Dendritic cell treated with granulocyte-macrophage colony-stimulating factor and Interleukin-4, amounts not matched to agents 40 ng/mL and 50 ng/mL, for 4 days (primary cell): ENCODE measurements at regions of chr14 and their contacts with region 1.

Region 1: GRCh38 chr14:89489761-89490437 is 72.9 kb upstream of the FOXN3 start:
- H3K4me3 Mint-ChIP-seq: no peak overlapping the region
- H3K27ac Mint-ChIP-seq: peak overlapping the region; percentile 66
- H3K4me1 Mint-ChIP-seq: peaks cover 48% of the 10 kb centered on the region
- H3K27me3 Mint-ChIP-seq: no peaks in the 10 kb centered on the region

Region 2: DNA sequence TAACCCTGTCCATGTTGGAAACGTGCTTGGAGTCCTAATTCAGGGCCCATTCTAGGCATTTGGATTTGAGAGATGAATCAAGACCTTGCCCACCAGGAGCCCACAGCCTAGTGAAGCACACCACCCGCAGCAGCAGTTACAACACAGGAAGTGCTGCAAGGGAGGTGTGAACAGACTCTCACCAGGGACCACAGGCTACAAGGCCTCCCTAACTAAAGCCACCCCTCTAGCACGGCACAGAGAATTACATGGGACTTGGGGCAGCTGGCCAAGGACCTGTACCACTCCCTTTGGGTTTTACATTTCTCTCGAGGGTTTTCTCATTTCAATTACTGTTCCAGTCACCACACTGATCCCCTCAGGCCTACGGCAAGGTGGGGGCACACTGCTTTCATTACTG is 23.4 kb before region 1 on chr14:
- intact Hi-C with region 1: no loop called
- H3K4me3 Mint-ChIP-seq: no peak overlapping the region
- H3K27ac Mint-ChIP-seq: peak overlapping the region; percentile 40
- H3K4me1 Mint-ChIP-seq: peaks cover 83% of the 10 kb centered on the region
- H3K27me3 Mint-ChIP-seq: no peaks in the 10 kb centered on the region

Region 3: GRCh38 chr14:89504602-89505313 is 14.9 kb after region 1 on chr14:
- intact Hi-C with region 1: loop called (anchors 1 kb)
- H3K4me3 Mint-ChIP-seq: peak overlapping the region; percentile 13
- H3K27ac Mint-ChIP-seq: peak overlapping the region; percentile 96
- H3K4me1 Mint-ChIP-seq: peaks cover 47% of the 10 kb centered on the region
- H3K27me3 Mint-ChIP-seq: no peaks in the 10 kb centered on the region

Region 4: DNA sequence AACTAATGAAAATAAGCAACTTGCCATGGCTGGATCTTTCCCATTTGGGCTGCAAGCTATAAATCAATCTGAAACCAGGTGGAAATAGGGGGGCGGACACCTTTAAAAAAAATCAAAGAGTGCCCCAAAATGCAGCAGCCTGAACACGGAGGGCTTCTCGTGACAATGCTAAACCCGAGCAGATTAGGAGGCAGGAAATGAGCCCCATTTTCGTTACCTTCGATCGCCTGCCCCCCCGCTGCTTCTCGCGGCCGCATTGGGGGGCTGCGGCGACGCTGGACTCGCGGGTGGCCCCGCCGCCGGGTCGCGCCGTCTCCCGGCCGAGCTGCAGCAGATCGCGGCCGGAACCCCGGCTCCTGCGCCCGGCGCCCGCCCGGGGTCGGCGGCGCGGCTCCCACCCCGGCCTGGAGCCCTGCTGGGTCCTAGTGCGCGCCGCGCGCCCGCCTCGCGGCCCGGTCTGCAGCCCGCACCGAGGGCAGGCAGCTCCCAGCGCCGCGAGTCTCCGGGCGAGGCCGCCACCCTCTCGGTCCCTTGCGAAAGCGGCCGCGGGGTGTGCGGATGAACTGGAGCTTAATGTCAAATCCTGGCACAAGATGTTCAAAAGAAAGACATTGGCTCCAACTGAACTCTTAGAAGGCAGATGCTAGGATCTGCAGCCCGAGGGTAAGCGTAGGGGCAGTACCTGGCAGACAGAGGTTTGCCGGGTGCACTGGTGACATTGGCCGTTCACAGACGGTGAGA is 129.1 kb after region 1 on chr14:
- intact Hi-C with region 1: loop called (anchors 5 kb)
- H3K4me3 Mint-ChIP-seq: peak overlapping the region; percentile 83
- H3K27ac Mint-ChIP-seq: peak overlapping the region; percentile 80
- H3K4me1 Mint-ChIP-seq: peaks cover 46% of the 10 kb centered on the region
- H3K27me3 Mint-ChIP-seq: peaks cover 3% of the 10 kb centered on the region